Heart left ventricle (tissue), 16 donors: ENCODE measurements at regions of chr17 and their contacts with region 1.

Region 1: DNA sequence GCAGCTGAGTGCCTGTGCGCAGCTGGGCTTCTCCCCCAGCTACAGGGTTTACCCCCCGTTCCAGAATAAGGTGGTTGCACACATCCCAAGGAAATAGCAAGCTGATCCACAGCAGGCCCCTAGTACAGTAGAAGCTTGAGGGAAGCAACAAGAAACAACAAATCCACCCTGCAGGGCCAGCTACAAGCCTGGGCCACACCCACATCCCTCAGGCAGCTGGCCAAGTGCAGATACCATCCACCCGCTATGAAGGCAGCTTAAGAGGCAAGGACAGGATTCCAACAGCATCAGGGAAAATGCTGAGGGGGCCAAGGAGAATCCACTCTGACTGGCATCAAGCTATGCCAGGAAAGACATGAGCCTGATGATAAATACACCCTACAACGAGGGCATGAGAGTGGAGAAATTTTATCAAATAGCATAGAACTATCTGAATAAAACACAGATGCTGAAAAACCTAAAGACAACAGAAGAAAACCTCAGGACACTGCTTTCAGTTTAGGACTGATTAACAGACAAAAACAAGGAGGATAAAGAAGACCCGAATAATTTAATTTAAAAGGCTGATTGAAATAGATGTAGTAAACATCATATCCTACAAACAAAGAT is 67.0 kb upstream of the RCVRN start:
- DNase-seq: peak; percentile 65 to 88 (median 74)
- ATAC-seq: peak; percentile 53 to 79 (median 69)
- H3K4me3 ChIP-seq: no peak overlapping the region
- H3K27ac ChIP-seq: peak overlapping the region in 1 of 12 donors; percentile 39
- H3K4me1 ChIP-seq: peaks cover 0 to 50% (median 14%) of the 10 kb centered on the region in 12 donors
- H3K27me3 ChIP-seq: no peaks in the 10 kb centered on the region
- CTCF ChIP-seq: no peak
- POLR2A ChIP-seq: no peak

Region 2: GRCh38 chr17:9865586-9865985 is 106.5 kb before region 1 on chr17:
- intact Hi-C with region 1: no loop called
- DNase-seq: no peak
- ATAC-seq: no peak
- H3K4me3 ChIP-seq: no peak overlapping the region
- H3K27ac ChIP-seq: no peak overlapping the region
- H3K4me1 ChIP-seq: no peaks in the 10 kb centered on the region
- H3K27me3 ChIP-seq: no peaks in the 10 kb centered on the region
- CTCF ChIP-seq: no peak
- POLR2A ChIP-seq: no peak

Region 3: GRCh38 chr17:10021272-10021984 is 49.3 kb after region 1 on chr17:
- intact Hi-C with region 1: loop called in 1 of 10 experiments (anchors 5 kb)
- DNase-seq: peak in 3 of 5 donors; percentile 50 to 75 (median 54)
- ATAC-seq: peak in 3 of 4 donors; percentile 23 to 52 (median 32)
- H3K4me3 ChIP-seq: no peak overlapping the region
- H3K27ac ChIP-seq: peak overlapping the region in 1 of 12 donors; percentile 42
- H3K4me1 ChIP-seq: peaks cover 0 to 86% (median 17%) of the 10 kb centered on the region in 12 donors
- H3K27me3 ChIP-seq: no peaks in the 10 kb centered on the region
- CTCF ChIP-seq: no peak
- POLR2A ChIP-seq: no peak

Region 4: DNA sequence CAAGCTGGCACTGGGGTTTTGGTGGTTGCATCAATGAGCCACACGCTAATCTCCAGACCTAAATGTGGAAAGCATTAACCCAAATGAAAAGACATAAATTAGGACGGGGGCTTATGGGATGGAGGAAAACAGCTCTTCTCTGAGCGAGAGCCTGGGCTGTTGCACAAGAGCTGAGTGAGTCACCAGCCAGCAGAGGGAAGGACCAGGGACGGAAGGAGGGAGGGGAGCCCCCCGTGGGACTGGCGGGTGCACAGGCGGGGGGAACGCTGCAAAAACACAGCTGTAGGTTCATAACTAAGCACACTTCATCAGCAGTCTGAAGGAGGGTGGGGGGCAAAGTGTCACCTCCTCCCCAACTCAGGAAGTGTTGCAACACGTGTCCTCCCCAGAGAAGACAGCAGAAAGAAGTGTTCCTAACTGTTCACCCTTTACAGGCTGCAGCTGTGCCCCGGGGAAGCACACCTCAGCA is 143.0 kb after region 1 on chr17:
- intact Hi-C with region 1: loop called in 1 of 10 experiments (anchors 5 kb)
- DNase-seq: peak; percentile 91 to 96 (median 94)
- ATAC-seq: peak; percentile 77 to 91 (median 91)
- H3K4me3 ChIP-seq: peak overlapping the region in 10 of 12 donors; percentile 3 to 45 (median 28)
- H3K27ac ChIP-seq: peak overlapping the region; percentile 72 to 96 (median 92)
- H3K4me1 ChIP-seq: peaks cover 0 to 81% (median 45%) of the 10 kb centered on the region in 12 donors
- H3K27me3 ChIP-seq: no peaks in the 10 kb centered on the region
- CTCF ChIP-seq: no peak
- POLR2A ChIP-seq: no peak

Region 5: GRCh38 chr17:10226930-10227685 is 255.0 kb after region 1 on chr17:
- intact Hi-C with region 1: loop called in 5 of 10 experiments (anchors 2 to 5 kb)
- DNase-seq: peak; percentile 32 to 75 (median 50)
- ATAC-seq: peak in 3 of 4 donors; percentile 75 to 88 (median 81)
- H3K4me3 ChIP-seq: no peak overlapping the region
- H3K27ac ChIP-seq: no peak overlapping the region
- H3K4me1 ChIP-seq: no peaks in the 10 kb centered on the region
- H3K27me3 ChIP-seq: no peaks in the 10 kb centered on the region
- CTCF ChIP-seq: peak; percentile 61 to 89 (median 73)
- POLR2A ChIP-seq: no peak

Region 6: DNA sequence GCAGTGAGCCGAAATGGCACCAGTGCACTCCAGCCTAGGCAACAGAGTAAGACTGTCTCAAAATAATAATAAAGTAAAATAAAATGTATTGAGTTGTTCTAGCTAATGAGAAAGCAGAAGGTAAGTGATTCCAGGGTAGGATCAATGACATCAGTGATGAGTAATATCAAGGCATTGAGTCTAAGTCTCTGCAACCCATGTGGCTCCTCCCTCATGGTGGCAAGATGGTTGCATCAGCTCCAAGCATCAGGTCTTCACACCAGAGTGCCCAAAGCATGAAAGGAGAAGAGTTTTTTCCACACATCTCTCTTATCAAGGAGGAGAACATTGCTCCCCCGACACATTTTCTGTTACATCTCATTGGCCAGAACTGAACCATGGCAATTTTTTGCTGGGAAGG is 261.1 kb after region 1 on chr17:
- intact Hi-C with region 1: loop called in 4 of 10 experiments (anchors 5 kb)
- DNase-seq: no peak
- ATAC-seq: no peak
- H3K4me3 ChIP-seq: no peak overlapping the region
- H3K27ac ChIP-seq: no peak overlapping the region
- H3K4me1 ChIP-seq: no peaks in the 10 kb centered on the region
- H3K27me3 ChIP-seq: no peaks in the 10 kb centered on the region
- CTCF ChIP-seq: no peak
- POLR2A ChIP-seq: no peak